ENCODE measurements at regions of chr20 and their contacts with region 1.

Region 1: GRCh38 chr20:8213831-8214587 is 81.9 kb downstream of the PLCB1 start:
- DNase-seq: peak in 2 of 9 experiments; percentile 33 to 59
- ATAC-seq: peak; percentile 81
- H3K4me3 ChIP-seq: peak overlapping the region; percentile 31 to 34
- H3K4me3 Mint-ChIP-seq: peak overlapping the region; percentile 81
- H3K27ac ChIP-seq: peak overlapping the region; percentile 0 to 62
- H3K27ac Mint-ChIP-seq: peak overlapping the region; percentile 91
- H3K4me1 ChIP-seq: peaks cover 6% of the 10 kb centered on the region
- H3K4me1 Mint-ChIP-seq: peaks cover 30% of the 10 kb centered on the region
- H3K27me3 ChIP-seq: no peaks in the 10 kb centered on the region
- H3K27me3 Mint-ChIP-seq: no peaks in the 10 kb centered on the region
- CTCF ChIP-seq: no peak

Region 2: GRCh38 chr20:8019246-8019997 is 194.6 kb before region 1 on chr20 and contains the start of gene TMX4:
- CTCF ChIA-PET with region 1: no interaction called
- POLR2A ChIA-PET with region 1: no interaction called
- intact Hi-C with region 1: loop called in 1 of 2 experiments (anchors 5 kb)
- DNase-seq: peak; percentile 72 to 94 (median 88)
- ATAC-seq: peak; percentile 78
- H3K4me3 ChIP-seq: peak within 1 kb of the TSS; percentile 49 to 68
- H3K4me3 Mint-ChIP-seq: peak within 1 kb of the TSS; percentile 94
- H3K27ac ChIP-seq: peak within 1 kb of the TSS; percentile 70 to 81
- H3K27ac Mint-ChIP-seq: peak within 1 kb of the TSS; percentile 93
- H3K4me1 ChIP-seq: peaks cover 25% of the 10 kb centered on the region
- H3K4me1 Mint-ChIP-seq: peaks cover 33% of the 10 kb centered on the region
- H3K27me3 ChIP-seq: no peaks in the 10 kb centered on the region
- H3K27me3 Mint-ChIP-seq: no peaks in the 10 kb centered on the region
- CTCF ChIP-seq: no peak
- total RNA-seq, gene TMX4: 45.6 to 47.9 TPM

Region 3: GRCh38 chr20:8156235-8157079 is 57.6 kb before region 1 on chr20:
- CTCF ChIA-PET with region 1: no interaction called
- POLR2A ChIA-PET with region 1: no interaction called
- intact Hi-C with region 1: loop called in 1 of 2 experiments (anchors 10 kb)
- DNase-seq: peak in 2 of 9 experiments; percentile 63 to 72
- ATAC-seq: peak; percentile 63
- H3K4me3 ChIP-seq: no peak overlapping the region
- H3K4me3 Mint-ChIP-seq: no peak overlapping the region
- H3K27ac ChIP-seq: no peak overlapping the region
- H3K27ac Mint-ChIP-seq: peak overlapping the region; percentile 38
- H3K4me1 ChIP-seq: peaks cover 52% of the 10 kb centered on the region
- H3K4me1 Mint-ChIP-seq: peaks cover 55% of the 10 kb centered on the region
- H3K27me3 ChIP-seq: no peaks in the 10 kb centered on the region
- H3K27me3 Mint-ChIP-seq: no peaks in the 10 kb centered on the region
- CTCF ChIP-seq: no peak

Region 4: DNA sequence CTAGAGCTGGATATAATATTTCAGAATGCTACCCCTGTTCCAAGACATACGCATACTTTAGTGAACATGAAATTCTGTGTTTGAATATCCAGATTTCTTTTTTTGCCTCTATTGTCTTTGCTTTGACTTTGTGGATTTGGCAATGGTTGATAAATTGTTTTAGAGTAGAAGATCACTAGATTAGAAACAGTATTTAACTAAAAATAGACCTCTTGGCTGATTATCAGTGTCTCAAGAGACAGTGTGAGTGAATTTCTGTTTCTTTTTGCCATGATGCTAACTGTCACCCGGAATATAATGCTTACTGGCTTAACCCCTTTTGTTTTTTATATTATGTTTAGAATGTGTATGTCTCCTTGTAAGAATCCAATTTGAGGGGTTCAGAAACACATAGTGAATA is 20.6 kb after region 1 on chr20:
- CTCF ChIA-PET with region 1: no interaction called
- POLR2A ChIA-PET with region 1: no interaction called
- intact Hi-C with region 1: no loop called
- DNase-seq: no peak
- ATAC-seq: no peak
- H3K4me3 ChIP-seq: no peak overlapping the region
- H3K4me3 Mint-ChIP-seq: no peak overlapping the region
- H3K27ac ChIP-seq: no peak overlapping the region
- H3K27ac Mint-ChIP-seq: no peak overlapping the region
- H3K4me1 ChIP-seq: no peaks in the 10 kb centered on the region
- H3K4me1 Mint-ChIP-seq: peaks cover 3% of the 10 kb centered on the region
- H3K27me3 ChIP-seq: no peaks in the 10 kb centered on the region
- H3K27me3 Mint-ChIP-seq: no peaks in the 10 kb centered on the region
- CTCF ChIP-seq: no peak

Region 5: GRCh38 chr20:8255945-8256632 is 42.1 kb after region 1 on chr20:
- CTCF ChIA-PET with region 1: no interaction called
- POLR2A ChIA-PET with region 1: no interaction called
- intact Hi-C with region 1: no loop called
- DNase-seq: no peak
- ATAC-seq: no peak
- H3K4me3 ChIP-seq: no peak overlapping the region
- H3K4me3 Mint-ChIP-seq: no peak overlapping the region
- H3K27ac ChIP-seq: no peak overlapping the region
- H3K27ac Mint-ChIP-seq: no peak overlapping the region
- H3K4me1 ChIP-seq: no peaks in the 10 kb centered on the region
- H3K4me1 Mint-ChIP-seq: peaks cover 4% of the 10 kb centered on the region
- H3K27me3 ChIP-seq: no peaks in the 10 kb centered on the region
- H3K27me3 Mint-ChIP-seq: no peaks in the 10 kb centered on the region
- CTCF ChIP-seq: no peak

Region 6: DNA sequence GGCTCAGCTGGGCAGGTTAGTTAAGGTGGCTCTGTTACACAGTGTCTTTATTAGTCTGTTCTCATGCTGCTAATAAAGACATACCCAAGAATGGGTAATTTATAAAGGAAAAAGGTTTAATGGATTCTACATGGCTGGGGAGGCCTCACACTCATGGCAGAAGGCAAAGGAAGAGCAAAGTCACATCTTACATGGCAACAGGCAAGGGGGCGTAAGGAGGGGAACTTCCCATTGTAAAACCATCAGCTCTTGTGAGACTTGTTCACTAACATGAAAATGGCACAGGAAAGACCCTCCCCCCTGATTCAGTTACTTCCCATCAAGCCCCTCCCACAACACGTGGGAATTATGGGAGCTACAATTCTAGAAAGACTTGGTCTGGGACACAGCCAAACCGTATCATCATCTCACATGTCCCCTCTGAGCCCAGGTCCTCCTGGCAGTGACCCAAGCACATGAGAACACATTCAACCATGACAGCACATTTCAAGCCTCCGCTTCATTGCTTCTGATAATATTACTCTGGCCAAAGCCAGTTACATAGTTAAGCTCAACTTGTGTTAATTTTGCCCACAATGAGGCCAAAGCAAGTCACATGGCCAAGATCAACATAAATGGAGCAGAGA is 301.9 kb after region 1 on chr20:
- CTCF ChIA-PET with region 1: no interaction called
- POLR2A ChIA-PET with region 1: no interaction called
- intact Hi-C with region 1: no loop called
- DNase-seq: no peak
- ATAC-seq: no peak
- H3K4me3 ChIP-seq: no peak overlapping the region
- H3K4me3 Mint-ChIP-seq: no peak overlapping the region
- H3K27ac ChIP-seq: no peak overlapping the region
- H3K27ac Mint-ChIP-seq: no peak overlapping the region
- H3K4me1 ChIP-seq: no peaks in the 10 kb centered on the region
- H3K4me1 Mint-ChIP-seq: no peaks in the 10 kb centered on the region
- H3K27me3 ChIP-seq: no peaks in the 10 kb centered on the region
- H3K27me3 Mint-ChIP-seq: no peaks in the 10 kb centered on the region
- CTCF ChIP-seq: no peak